Activated naive CD8-positive, alpha-beta T cell treated with anti-CD3 and anti-CD28 coated beads, Interleukin-2, amount 10 ng/mL, durations not matched to agents 7 days and 5 days (primary cell): ENCODE measurements at regions of chr11 and their contacts with region 1.

Region 1: GRCh38 chr11:128630367-128631230 is 43.2 kb upstream of the ETS1 start:
- DNase-seq: peak; percentile 93
- ATAC-seq: peak; percentile 75
- H3K4me3 Mint-ChIP-seq: peak overlapping the region; percentile 84
- H3K27ac Mint-ChIP-seq: peak overlapping the region; percentile 93
- H3K4me1 Mint-ChIP-seq: peaks cover 63% of the 10 kb centered on the region
- H3K27me3 Mint-ChIP-seq: no peaks in the 10 kb centered on the region

Region 2: GRCh38 chr11:128472128-128473089 is 158.2 kb before region 1 on chr11:
- POLR2A ChIA-PET with region 1: interaction called, 36 read pairs
- DNase-seq: no peak
- ATAC-seq: peak; percentile 49
- H3K4me3 Mint-ChIP-seq: peak overlapping the region; percentile 74
- H3K27ac Mint-ChIP-seq: peak overlapping the region; percentile 97
- H3K4me1 Mint-ChIP-seq: peaks cover 88% of the 10 kb centered on the region
- H3K27me3 Mint-ChIP-seq: no peaks in the 10 kb centered on the region

Region 3: DNA sequence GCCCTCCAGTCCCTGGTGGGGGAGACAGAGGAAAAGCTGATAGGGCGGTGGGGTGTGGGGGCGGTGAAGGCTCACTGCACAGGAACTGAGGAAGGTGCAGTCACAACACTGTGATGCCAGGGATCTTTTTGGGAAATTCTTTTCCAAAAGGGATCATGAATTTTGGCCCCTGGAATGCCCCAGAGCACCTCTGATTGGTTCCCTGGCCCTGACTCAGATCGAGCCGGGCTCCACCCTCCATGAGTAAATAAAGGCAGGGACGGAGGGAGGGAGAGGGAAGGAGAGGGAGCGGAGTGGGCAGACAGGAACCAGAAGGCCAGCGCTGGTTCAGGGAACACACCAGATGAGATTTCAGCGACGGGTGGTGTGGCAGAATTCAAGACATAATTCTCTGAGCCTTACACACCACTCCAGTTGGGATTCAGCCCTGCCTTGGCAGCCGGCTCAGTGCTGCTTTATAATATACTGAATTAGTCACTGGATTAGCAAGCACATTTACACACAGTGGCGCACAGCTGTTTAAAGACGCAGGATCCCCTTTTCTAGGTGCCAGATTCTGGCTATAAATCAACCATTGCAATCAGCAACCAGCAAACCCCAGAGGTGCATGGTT is 123.5 kb before region 1 on chr11:
- POLR2A ChIA-PET with region 1: interaction called, 14 read pairs
- DNase-seq: no peak
- ATAC-seq: peak; percentile 3
- H3K4me3 Mint-ChIP-seq: peak overlapping the region; percentile 98
- H3K27ac Mint-ChIP-seq: peak overlapping the region; percentile 89
- H3K4me1 Mint-ChIP-seq: peaks cover 87% of the 10 kb centered on the region
- H3K27me3 Mint-ChIP-seq: no peaks in the 10 kb centered on the region

Region 4: GRCh38 chr11:128512474-128512996 is 118.1 kb before region 1 on chr11:
- POLR2A ChIA-PET with region 1: interaction called, 31 read pairs
- DNase-seq: peak; percentile 72
- ATAC-seq: peak; percentile 50
- H3K4me3 Mint-ChIP-seq: peak overlapping the region; percentile 98
- H3K27ac Mint-ChIP-seq: peak overlapping the region; percentile 97
- H3K4me1 Mint-ChIP-seq: peaks cover 84% of the 10 kb centered on the region
- H3K27me3 Mint-ChIP-seq: no peaks in the 10 kb centered on the region

Region 5: DNA sequence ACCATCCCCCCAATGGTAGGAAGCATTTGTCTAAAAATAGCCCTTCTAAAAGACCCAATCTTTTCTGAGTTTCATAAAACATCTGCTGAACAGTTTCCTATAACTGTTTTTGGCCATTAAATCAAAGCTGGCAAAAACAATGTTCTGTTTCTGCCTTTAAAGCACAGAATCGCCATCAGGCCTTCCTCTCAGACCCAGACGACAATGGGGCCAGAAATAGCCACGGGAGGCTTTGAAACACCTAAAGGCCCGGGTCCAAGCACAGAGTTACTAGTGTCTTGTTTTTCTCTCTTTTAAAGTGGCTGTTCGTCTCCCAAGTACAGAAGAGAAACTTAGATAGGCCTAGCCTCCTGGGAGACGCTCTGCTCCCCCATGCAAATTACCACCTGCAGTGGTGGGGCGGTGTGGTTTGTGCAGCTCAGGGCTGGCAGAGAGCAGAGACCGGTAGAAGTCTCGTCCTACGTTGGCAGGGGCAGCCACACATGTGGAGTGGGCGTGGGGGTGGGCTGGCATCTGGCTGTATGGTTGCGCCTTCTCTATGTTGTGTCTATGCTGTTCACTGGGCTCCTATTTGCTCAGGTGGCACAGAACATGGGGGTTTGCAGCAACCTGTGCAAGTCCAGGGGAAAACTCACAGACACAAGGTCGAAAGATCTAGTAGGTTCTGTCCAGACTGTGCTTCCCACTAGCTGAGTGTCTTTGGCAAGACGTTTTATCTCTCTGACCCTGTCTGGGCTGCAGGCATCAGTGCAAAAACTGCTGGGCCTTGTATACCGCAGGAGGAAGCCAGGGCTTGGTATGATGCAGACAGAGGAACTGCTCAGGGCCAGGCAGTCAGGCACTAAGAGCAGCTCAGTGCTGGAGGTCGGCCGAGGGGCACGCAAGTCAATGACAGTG is 19.6 kb before region 1 on chr11:
- POLR2A ChIA-PET with region 1: interaction called, 28 read pairs
- DNase-seq: peak; percentile 63
- ATAC-seq: peak; percentile 94
- H3K4me3 Mint-ChIP-seq: peak overlapping the region; percentile 75
- H3K27ac Mint-ChIP-seq: peak overlapping the region; percentile 90
- H3K4me1 Mint-ChIP-seq: peaks cover 32% of the 10 kb centered on the region
- H3K27me3 Mint-ChIP-seq: no peaks in the 10 kb centered on the region